WTC11 (cell line): ENCODE measurements at regions of chr17 and their contacts with region 1.

Region 1: DNA sequence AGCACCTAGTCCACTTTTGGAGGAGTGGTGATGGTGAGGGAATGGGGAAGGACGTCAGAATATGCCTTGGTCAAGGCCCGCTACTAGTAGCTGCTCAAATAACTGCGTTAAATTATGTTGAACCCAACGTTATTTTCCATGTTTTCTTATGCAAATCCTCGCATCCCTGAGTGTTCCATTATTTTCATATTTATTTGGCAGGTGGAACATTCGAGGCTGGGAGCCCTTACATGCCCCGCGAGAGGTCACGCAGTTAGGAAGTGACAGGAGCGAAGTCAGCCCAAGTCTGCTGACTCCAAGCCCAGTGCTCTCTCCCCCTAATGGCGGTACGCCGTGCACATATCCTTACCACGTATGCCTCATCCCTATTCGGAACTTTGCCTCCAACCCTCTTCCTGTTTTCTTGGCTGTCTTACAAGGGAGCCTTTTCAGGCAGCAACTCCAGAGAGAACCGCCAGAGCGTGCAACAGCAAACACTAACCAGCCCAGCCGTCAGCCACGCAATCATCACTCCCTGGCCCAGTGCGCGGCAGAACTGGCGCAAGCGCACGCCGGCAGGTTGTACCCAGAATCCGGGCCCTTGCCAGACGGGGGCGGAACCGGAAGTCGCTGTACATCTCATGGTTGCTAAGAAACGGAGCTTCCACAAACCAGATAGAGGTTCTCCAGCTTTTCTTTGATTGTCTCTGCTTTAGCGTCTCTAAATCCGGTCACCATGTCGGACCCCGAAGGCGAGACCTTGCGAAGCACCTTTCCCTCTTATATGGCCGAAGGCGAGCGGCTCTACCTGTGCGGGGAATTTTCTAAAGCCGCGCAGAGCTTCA is at the start of gene ODAD4:
- DNase-seq: peak; percentile 95
- ATAC-seq: peak; percentile 99
- H3K4me3 Mint-ChIP-seq: peak within 1 kb of the TSS; percentile 96
- H3K27ac Mint-ChIP-seq: peak within 1 kb of the TSS; percentile 99
- H3K4me1 Mint-ChIP-seq: peaks cover 14% of the 10 kb centered on the region
- H3K27me3 Mint-ChIP-seq: no peaks in the 10 kb centered on the region; the same call in 1 of the 2 replicates
- CTCF ChIP-seq: no peak
- total RNA-seq, gene ODAD4: 1.2 to 2.1 TPM (median 1.9 TPM) in 3 replicates

Region 2: GRCh38 chr17:41792845-41793783 is 137.1 kb before region 1 on chr17:
- CTCF ChIA-PET with region 1: no interaction called
- POLR2A ChIA-PET with region 1: no interaction called
- DNase-seq: no peak
- ATAC-seq: peak; percentile 21
- H3K4me3 Mint-ChIP-seq: peak overlapping the region; percentile 60
- H3K27ac Mint-ChIP-seq: no peak overlapping the region
- H3K4me1 Mint-ChIP-seq: peaks cover 35% of the 10 kb centered on the region
- H3K27me3 Mint-ChIP-seq: peaks cover 46% of the 10 kb centered on the region
- CTCF ChIP-seq: no peak

Region 3: GRCh38 chr17:41848788-41849187 is 81.4 kb before region 1 on chr17:
- CTCF ChIA-PET with region 1: no interaction called
- POLR2A ChIA-PET with region 1: no interaction called
- DNase-seq: no peak
- ATAC-seq: no peak
- H3K4me3 Mint-ChIP-seq: no peak overlapping the region
- H3K27ac Mint-ChIP-seq: no peak overlapping the region
- H3K4me1 Mint-ChIP-seq: peaks cover 2% of the 10 kb centered on the region; the same call in 1 of the 2 replicates
- H3K27me3 Mint-ChIP-seq: no peaks in the 10 kb centered on the region
- CTCF ChIP-seq: no peak

Region 4: DNA sequence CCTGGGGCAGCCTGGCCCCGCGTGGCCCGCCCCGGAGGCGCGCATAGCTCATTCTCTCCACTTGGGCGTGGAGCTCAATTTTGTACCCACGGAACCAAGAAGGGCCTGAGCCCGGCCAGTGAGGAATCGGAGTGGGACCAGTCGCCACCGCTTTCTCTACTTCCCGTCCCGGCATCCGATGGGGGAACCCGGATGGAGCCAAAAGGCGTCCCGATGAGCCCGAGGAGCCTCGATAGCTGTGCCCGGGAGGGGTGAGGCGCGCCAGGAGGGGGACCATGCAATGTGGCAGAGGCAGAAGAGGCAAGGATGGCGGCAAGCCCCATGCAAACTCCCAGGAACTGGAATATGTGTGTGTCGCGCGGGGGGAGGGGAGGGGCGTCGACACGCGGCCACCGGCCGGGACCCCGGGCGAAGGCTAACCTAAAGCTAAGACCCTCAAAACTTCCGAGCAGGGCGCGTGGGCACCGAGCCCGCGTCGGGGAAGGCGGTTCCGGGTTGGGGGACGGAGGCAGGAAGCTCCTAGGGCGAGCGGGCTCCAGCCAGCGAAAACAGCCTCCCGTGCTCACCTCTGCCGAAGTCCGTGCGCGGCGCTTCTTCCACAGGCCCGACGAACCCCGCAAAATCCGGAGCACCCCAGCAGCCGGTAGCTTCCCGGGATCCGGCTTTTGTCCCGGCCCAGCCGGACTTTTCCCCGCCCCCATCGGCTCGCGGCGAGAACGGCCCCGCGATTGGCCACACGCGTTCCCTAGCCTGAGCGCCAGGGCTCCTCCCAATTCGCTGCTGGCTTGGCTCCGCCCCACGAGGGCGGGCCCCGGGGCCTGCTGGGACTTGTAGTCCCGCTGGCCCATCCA is 11.7 kb before region 1 on chr17 and contains the start of gene ACLY:
- CTCF ChIA-PET with region 1: interaction called, 26 read pairs
- POLR2A ChIA-PET with region 1: interaction called, 13 read pairs
- DNase-seq: peak; percentile 99
- ATAC-seq: peak; percentile 89
- H3K4me3 Mint-ChIP-seq: peak within 1 kb of the TSS; percentile 84
- H3K27ac Mint-ChIP-seq: peak within 1 kb of the TSS; percentile 96
- H3K4me1 Mint-ChIP-seq: peaks cover 51% of the 10 kb centered on the region
- H3K27me3 Mint-ChIP-seq: no peaks in the 10 kb centered on the region
- CTCF ChIP-seq: no peak
- total RNA-seq, gene ACLY: 312 to 350 TPM (median 316 TPM) in 3 replicates

Region 5: DNA sequence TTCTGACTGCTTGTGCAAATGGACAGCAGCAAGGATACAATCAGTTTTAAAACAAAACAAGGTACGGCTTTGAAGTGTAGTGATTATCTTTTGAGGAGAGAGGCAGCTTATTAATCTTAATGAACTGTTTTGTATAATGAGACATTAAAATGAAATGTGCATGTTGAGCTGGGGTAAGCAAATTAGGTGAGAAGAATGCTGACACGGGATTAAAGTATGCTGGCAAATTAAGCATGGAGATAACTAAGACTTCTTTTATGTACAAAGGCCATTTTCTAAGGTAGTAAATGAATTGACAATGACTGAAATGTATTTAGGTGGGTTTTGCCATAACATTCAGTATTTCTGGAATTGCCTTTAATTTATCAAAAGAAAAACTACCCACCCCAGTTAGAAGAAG is 68.3 kb after region 1 on chr17:
- CTCF ChIA-PET with region 1: no interaction called
- POLR2A ChIA-PET with region 1: no interaction called
- DNase-seq: no peak
- ATAC-seq: no peak
- H3K4me3 Mint-ChIP-seq: no peak overlapping the region
- H3K27ac Mint-ChIP-seq: no peak overlapping the region
- H3K4me1 Mint-ChIP-seq: no peaks in the 10 kb centered on the region
- H3K27me3 Mint-ChIP-seq: no peaks in the 10 kb centered on the region; the same call in 1 of the 2 replicates
- CTCF ChIP-seq: no peak

Region 6: GRCh38 chr17:42050393-42051012 is 120.3 kb after region 1 on chr17 and contains the start of gene C17orf113:
- CTCF ChIA-PET with region 1: interaction called, 3 read pairs
- POLR2A ChIA-PET with region 1: interaction called, 10 read pairs
- DNase-seq: peak; percentile 75
- ATAC-seq: peak; percentile 72
- H3K4me3 Mint-ChIP-seq: peak within 1 kb of the TSS; percentile 76
- H3K27ac Mint-ChIP-seq: no peak within 1 kb of the TSS
- H3K4me1 Mint-ChIP-seq: peaks cover 46% of the 10 kb centered on the region
- H3K27me3 Mint-ChIP-seq: peaks cover 9% of the 10 kb centered on the region
- CTCF ChIP-seq: no peak
- total RNA-seq, gene C17orf113: 1.9 to 2.8 TPM (median 2.5 TPM) in 3 replicates